B cell (primary cell): ENCODE measurements at regions of chr11 and their contacts with region 1.

Region 1: DNA sequence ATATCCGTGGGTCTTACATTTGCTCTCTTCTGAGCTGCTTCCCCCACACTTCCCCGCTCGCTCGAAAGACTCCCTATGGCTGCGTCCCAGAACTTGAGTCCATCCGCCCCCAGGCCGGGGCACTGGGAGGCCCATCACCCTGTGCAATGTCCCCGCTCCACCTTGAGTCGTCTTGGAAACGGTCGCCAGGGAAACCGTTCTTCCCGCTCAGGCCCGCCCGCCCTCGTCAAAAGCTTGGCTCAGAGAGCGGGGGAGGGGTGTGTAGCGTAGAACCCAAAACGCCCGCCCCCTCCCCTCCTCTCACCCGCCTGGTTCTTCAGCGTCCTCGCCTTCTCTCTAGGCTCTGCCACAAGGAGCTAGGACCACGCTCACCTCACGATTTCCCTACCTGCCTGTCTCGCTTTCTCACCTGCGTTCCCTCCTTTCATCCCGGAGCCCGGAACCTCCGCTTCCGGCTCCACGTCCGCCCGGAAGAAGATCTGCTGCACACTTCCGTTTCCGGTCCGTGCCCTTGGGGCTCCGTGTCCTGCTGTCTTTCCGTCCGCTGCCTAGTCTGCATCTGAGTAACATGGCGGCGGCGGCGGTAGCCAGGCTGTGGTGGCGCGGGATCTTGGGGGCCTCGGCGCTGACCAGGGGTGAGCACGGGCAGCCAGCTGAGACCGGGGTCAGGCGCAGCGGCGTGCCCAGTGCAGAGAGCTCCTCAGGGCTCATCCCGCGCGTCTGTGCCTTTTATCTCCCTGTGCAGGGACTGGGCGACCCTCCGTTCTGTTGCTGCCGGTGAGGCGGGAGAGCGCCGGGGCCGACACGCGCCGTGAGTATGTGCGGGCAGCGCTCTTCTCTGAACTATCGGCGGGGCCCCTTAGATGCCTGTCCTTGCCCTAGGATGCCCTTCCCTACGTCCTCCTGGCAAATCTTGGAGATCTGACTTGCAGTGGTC is at the starts of genes KBTBD4 and NDUFS3:
- DNase-seq: peak; percentile 94
- ATAC-seq: peak; percentile 95
- H3K4me3 ChIP-seq: peak within 1 kb of the TSS; percentile 61 to 91 (median 87)
- H3K4me3 Mint-ChIP-seq: peak within 1 kb of the TSS; percentile 96
- H3K27ac ChIP-seq: peak within 1 kb of the TSS; percentile 78 to 81
- H3K27ac Mint-ChIP-seq: peak within 1 kb of the TSS; percentile 98
- H3K4me1 ChIP-seq: peaks cover 25 to 26% of the 10 kb centered on the region in 2 donors
- H3K4me1 Mint-ChIP-seq: peaks cover 32% of the 10 kb centered on the region
- H3K27me3 ChIP-seq: no peaks in the 10 kb centered on the region
- H3K27me3 Mint-ChIP-seq: no peaks in the 10 kb centered on the region
- CTCF ChIP-seq: no peak
- total RNA-seq, gene KBTBD4: 20.3 and 20.7 TPM in 2 replicates
- total RNA-seq, gene NDUFS3: 76.2 and 79.5 TPM in 2 replicates

Region 2: DNA sequence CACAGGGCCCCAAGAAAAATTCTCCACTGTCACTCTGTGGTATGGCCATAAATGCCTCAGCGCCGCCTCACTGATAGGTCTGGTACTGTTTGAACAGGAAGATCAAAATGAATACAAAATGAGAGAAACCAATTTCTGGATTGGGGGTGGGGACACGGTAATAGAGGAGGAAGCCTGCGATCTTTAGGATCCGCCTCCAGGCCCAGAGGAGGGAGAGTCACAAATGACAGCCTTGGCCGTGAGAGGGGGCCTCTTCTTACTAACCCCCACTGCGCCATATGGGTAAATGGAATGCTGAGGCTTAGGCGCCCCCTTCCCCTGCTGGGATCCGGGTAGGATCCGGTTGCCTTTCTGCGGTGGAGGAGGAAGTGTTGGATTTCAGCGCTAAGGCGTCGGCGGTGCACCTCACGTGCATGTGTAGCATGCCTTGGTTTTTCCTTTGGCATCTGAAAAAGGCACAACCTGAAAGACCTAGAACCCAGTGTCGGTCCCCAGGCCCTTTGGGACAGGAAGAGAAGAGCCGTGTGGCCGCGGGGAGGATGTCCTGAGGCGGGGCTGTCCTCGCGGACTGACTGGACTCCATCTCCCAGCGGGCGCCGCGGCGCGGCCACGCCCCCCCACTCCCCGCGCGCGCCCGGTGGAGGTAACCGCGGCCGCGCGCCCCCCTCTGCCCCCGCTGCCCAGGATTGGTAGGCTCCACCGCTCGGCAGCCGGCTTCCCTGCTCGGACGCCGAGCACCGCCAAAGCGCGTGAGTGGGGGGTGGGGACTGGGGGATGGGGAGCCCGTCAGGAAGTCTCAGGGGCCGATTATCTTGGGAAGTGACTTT is 309.6 kb before region 1 on chr11:
- CTCF ChIA-PET with region 1: no interaction called
- POLR2A ChIA-PET with region 1: no interaction called
- intact Hi-C with region 1: loop called (anchors 5 kb)
- DNase-seq: peak; percentile 92
- ATAC-seq: peak; percentile 67
- H3K4me3 ChIP-seq: peak overlapping the region; percentile 58 to 89 (median 84)
- H3K4me3 Mint-ChIP-seq: peak overlapping the region; percentile 89
- H3K27ac ChIP-seq: peak overlapping the region; percentile 90 to 92
- H3K27ac Mint-ChIP-seq: peak overlapping the region; percentile 94
- H3K4me1 ChIP-seq: peaks cover 47 to 48% of the 10 kb centered on the region in 2 donors
- H3K4me1 Mint-ChIP-seq: peaks cover 55% of the 10 kb centered on the region
- H3K27me3 ChIP-seq: no peaks in the 10 kb centered on the region
- H3K27me3 Mint-ChIP-seq: no peaks in the 10 kb centered on the region
- CTCF ChIP-seq: no peak

Region 3: GRCh38 chr11:47552566-47553416 is 26.0 kb before region 1 on chr11 and contains the start of gene CELF1:
- CTCF ChIA-PET with region 1: interaction called, 5 read pairs
- POLR2A ChIA-PET with region 1: no interaction called
- intact Hi-C with region 1: loop called (anchors 1 kb)
- DNase-seq: peak; percentile 96
- ATAC-seq: peak; percentile 95
- H3K4me3 ChIP-seq: peak within 1 kb of the TSS; percentile 65 to 94 (median 90)
- H3K4me3 Mint-ChIP-seq: peak within 1 kb of the TSS; percentile 99
- H3K27ac ChIP-seq: peak within 1 kb of the TSS; percentile 72 to 88
- H3K27ac Mint-ChIP-seq: peak within 1 kb of the TSS; percentile 93
- H3K4me1 ChIP-seq: peaks cover 31 to 32% of the 10 kb centered on the region in 2 donors
- H3K4me1 Mint-ChIP-seq: peaks cover 44% of the 10 kb centered on the region
- H3K27me3 ChIP-seq: no peaks in the 10 kb centered on the region
- H3K27me3 Mint-ChIP-seq: no peaks in the 10 kb centered on the region
- CTCF ChIP-seq: peak; percentile 96
- total RNA-seq, gene CELF1: 153 and 167 TPM in 2 replicates

Region 4: DNA sequence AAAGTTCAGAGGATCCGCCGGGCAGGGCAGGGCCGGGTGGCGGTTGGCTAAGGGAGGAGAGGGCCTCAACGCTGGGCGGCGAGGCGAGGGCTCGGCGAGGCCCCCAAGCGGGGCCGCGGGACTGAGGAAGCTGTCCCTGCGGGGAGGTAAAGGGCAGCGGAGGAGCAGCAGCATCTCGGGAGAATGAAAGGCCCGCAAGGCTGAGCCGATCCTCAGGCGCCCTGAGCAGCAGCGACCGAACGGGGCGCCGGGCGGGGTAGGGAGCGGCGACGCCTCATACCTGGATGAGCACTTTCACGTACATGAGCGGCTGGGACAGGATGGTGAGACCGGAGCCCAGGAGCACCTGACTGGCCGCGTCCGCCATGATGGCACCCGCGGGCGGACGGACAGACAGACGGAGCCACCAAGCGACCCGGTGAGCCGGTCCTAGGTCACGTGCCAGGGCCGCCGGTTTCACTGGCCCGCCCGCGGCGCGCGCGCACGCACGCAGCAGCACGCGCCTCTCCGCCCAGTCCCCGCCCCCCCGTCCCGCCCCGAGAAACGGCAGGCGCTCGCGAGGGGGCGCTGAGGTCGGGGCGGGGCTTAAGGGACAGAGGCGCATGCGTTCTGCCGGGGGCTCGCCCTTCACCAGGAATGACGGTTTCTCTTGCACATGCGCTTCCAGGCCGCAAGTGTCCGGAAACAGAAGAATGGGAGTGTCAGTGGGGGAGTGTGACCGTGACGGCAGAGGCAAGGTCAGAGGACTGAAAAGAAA is 63.5 kb after region 1 on chr11 and contains the start of gene MTCH2:
- CTCF ChIA-PET with region 1: no interaction called
- POLR2A ChIA-PET with region 1: no interaction called
- intact Hi-C with region 1: loop called (anchors 1 kb)
- DNase-seq: peak; percentile 99
- ATAC-seq: peak; percentile 94
- H3K4me3 ChIP-seq: peak within 1 kb of the TSS; percentile 79 to 86 (median 79)
- H3K4me3 Mint-ChIP-seq: peak within 1 kb of the TSS; percentile 93
- H3K27ac ChIP-seq: peak within 1 kb of the TSS; percentile 92
- H3K27ac Mint-ChIP-seq: peak within 1 kb of the TSS; percentile 96
- H3K4me1 ChIP-seq: peaks cover 13 to 21% of the 10 kb centered on the region in 2 donors
- H3K4me1 Mint-ChIP-seq: peaks cover 23% of the 10 kb centered on the region
- H3K27me3 ChIP-seq: no peaks in the 10 kb centered on the region
- H3K27me3 Mint-ChIP-seq: no peaks in the 10 kb centered on the region
- CTCF ChIP-seq: peak; percentile 29
- total RNA-seq, gene MTCH2: 26.9 and 30.9 TPM in 2 replicates

Region 5: DNA sequence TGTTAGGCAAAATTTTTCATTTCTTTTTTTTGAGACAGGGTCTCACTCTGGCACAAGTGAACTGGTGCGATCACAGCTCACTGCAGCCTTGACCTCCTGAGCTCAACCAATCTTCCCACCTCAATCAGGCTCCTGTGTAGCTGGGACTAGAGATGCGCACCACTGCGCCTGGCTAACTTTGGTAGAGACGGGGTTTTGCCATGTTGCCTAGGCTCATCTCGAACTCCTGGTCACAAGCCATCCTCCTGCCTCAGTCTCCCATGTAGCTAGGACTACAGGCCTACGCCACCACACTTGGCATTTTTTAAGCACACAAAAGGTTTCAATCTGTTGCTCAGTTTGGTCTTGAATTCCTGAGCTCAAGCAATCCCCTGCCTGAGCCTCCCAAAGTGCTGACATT is 179.3 kb after region 1 on chr11:
- CTCF ChIA-PET with region 1: no interaction called
- POLR2A ChIA-PET with region 1: interaction called, 10 read pairs
- intact Hi-C with region 1: no loop called
- DNase-seq: no peak
- ATAC-seq: no peak
- H3K4me3 ChIP-seq: no peak overlapping the region
- H3K4me3 Mint-ChIP-seq: no peak overlapping the region
- H3K27ac ChIP-seq: no peak overlapping the region
- H3K27ac Mint-ChIP-seq: no peak overlapping the region
- H3K4me1 ChIP-seq: no peaks in the 10 kb centered on the region
- H3K4me1 Mint-ChIP-seq: no peaks in the 10 kb centered on the region
- H3K27me3 ChIP-seq: no peaks in the 10 kb centered on the region
- H3K27me3 Mint-ChIP-seq: no peaks in the 10 kb centered on the region
- CTCF ChIP-seq: no peak